PC-9 (cell line): ENCODE measurements at regions of chr11 and their contacts with region 1.

Region 1: GRCh38 chr11:119084663-119085436 is at the start of gene HMBS:
- DNase-seq: peak; percentile 92 to 94
- H3K4me3 ChIP-seq: peak within 1 kb of the TSS; percentile 86
- H3K27ac ChIP-seq: peak within 1 kb of the TSS; percentile 53
- H3K4me1 ChIP-seq: peaks cover 24% of the 10 kb centered on the region
- H3K27me3 ChIP-seq: no peaks in the 10 kb centered on the region
- CTCF ChIP-seq: no peak
- total RNA-seq, gene HMBS: 49.3 and 54.9 TPM in 2 replicates

Region 2: GRCh38 chr11:118051611-118052461 is 1033.0 kb before region 1 on chr11:
- CTCF ChIA-PET with region 1: interaction called, 11 read pairs
- POLR2A ChIA-PET with region 1: no interaction called
- intact Hi-C with region 1: no loop called
- DNase-seq: no peak
- H3K4me3 ChIP-seq: no peak overlapping the region
- H3K27ac ChIP-seq: no peak overlapping the region
- H3K4me1 ChIP-seq: peaks cover 2% of the 10 kb centered on the region; the same call in 1 of the 2 replicates
- H3K27me3 ChIP-seq: peaks cover 16% of the 10 kb centered on the region
- CTCF ChIP-seq: no peak

Region 3: GRCh38 chr11:118988280-118988679 is 96.6 kb before region 1 on chr11:
- CTCF ChIA-PET with region 1: no interaction called
- POLR2A ChIA-PET with region 1: interaction called, 13 read pairs
- intact Hi-C with region 1: no loop called
- DNase-seq: peak; percentile 60 to 73
- H3K4me3 ChIP-seq: peak overlapping the region; percentile 9; the same call in 1 of the 2 replicates
- H3K27ac ChIP-seq: peak overlapping the region; percentile 64
- H3K4me1 ChIP-seq: peaks cover 9% of the 10 kb centered on the region
- H3K27me3 ChIP-seq: no peaks in the 10 kb centered on the region
- CTCF ChIP-seq: no peak

Region 4: DNA sequence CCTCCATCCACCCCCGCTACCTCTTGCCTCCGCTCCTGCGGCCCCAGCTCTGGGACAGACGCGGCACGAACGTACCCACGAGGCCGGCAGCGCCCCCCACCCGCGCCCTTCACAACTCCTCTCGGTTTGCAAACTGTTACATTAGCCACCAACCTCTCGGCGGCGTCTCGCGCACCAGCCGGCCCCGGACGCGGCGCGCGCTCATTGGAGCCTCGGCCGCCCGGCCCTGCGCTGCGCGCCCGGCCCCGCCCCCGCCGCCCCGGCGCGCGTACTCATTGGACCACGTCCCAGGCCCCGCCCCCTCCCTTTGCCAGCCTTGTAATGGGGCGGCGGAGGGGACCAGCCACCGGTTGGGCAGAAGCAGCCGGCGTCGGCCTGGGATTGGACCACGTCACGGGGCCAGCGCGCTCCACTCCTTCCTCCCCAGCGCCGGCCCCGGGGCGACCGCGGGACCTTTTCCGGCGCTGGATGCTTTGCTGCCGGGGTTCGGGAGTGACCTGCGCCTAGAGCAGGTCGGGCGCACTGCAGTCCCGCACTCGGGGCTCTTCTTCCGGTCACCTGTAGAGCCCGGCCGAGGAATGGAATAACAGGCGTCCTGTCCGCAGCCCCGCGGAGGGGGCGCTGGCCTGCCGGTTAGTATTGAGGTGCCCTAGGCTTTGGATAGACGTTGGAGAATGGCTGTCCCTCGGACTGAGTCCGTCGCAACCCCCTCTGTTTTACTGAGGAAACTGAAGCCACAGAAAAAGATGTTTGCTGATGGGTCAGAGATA is 27.7 kb before region 1 on chr11 and contains the start of gene HYOU1:
- CTCF ChIA-PET with region 1: no interaction called
- POLR2A ChIA-PET with region 1: no interaction called
- intact Hi-C with region 1: no loop called
- DNase-seq: peak; percentile 94 to 98
- H3K4me3 ChIP-seq: peak within 1 kb of the TSS; percentile 90
- H3K27ac ChIP-seq: peak within 1 kb of the TSS; percentile 95
- H3K4me1 ChIP-seq: peaks cover 14% of the 10 kb centered on the region
- H3K27me3 ChIP-seq: no peaks in the 10 kb centered on the region
- CTCF ChIP-seq: peak; percentile 41; the same call in 1 of the 2 replicates
- total RNA-seq, gene HYOU1: 92.0 and 117 TPM in 2 replicates

Region 5: GRCh38 chr11:119067371-119068222 is 17.3 kb before region 1 on chr11 and contains the start of gene VPS11:
- CTCF ChIA-PET with region 1: interaction called, 5 read pairs
- POLR2A ChIA-PET with region 1: interaction called, 29 read pairs
- intact Hi-C with region 1: no loop called
- DNase-seq: peak; percentile 95 to 96
- H3K4me3 ChIP-seq: peak within 1 kb of the TSS; percentile 89
- H3K27ac ChIP-seq: peak within 1 kb of the TSS; percentile 55
- H3K4me1 ChIP-seq: peaks cover 8% of the 10 kb centered on the region
- H3K27me3 ChIP-seq: no peaks in the 10 kb centered on the region
- CTCF ChIP-seq: 0 out of 2 replicates have a peak, but pooled peaks have one; percentile 14
- total RNA-seq, gene VPS11: 21.1 and 22.9 TPM in 2 replicates

Region 6: GRCh38 chr11:119262668-119263351 is 178.0 kb after region 1 on chr11:
- CTCF ChIA-PET with region 1: no interaction called
- POLR2A ChIA-PET with region 1: no interaction called
- intact Hi-C with region 1: no loop called
- DNase-seq: no peak
- H3K4me3 ChIP-seq: no peak overlapping the region
- H3K27ac ChIP-seq: no peak overlapping the region
- H3K4me1 ChIP-seq: no peaks in the 10 kb centered on the region
- H3K27me3 ChIP-seq: no peaks in the 10 kb centered on the region
- CTCF ChIP-seq: no peak

Region 7: DNA sequence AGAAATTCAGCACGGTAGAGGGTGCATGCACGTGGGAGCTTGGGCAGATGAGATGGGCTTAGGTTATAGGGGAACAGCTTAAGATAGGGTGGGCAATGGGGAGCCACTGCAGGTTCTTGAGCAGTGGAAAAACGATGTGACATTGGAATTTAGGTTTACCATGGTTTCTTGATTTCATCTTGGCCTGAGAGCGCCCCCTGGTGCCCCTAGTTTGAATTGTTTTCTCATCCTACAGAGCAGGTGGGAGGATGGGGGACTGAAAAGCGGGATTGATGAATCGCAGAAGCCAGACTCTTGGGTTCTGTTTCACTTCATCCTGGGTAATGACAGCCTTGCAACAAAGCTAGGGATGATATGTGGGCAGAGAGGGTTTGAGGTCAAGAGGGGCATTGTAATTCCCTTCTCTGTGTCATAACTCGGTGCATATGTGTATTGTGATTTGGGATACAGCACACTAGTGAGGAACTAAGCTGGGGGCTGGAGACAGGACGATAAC is 238.7 kb after region 1 on chr11:
- CTCF ChIA-PET with region 1: no interaction called
- POLR2A ChIA-PET with region 1: interaction called, 18 read pairs
- intact Hi-C with region 1: no loop called
- DNase-seq: peak; percentile 59 to 71
- H3K4me3 ChIP-seq: no peak overlapping the region
- H3K27ac ChIP-seq: no peak overlapping the region
- H3K4me1 ChIP-seq: peaks cover 22% of the 10 kb centered on the region
- H3K27me3 ChIP-seq: no peaks in the 10 kb centered on the region
- CTCF ChIP-seq: peak; percentile 96

Region 8: DNA sequence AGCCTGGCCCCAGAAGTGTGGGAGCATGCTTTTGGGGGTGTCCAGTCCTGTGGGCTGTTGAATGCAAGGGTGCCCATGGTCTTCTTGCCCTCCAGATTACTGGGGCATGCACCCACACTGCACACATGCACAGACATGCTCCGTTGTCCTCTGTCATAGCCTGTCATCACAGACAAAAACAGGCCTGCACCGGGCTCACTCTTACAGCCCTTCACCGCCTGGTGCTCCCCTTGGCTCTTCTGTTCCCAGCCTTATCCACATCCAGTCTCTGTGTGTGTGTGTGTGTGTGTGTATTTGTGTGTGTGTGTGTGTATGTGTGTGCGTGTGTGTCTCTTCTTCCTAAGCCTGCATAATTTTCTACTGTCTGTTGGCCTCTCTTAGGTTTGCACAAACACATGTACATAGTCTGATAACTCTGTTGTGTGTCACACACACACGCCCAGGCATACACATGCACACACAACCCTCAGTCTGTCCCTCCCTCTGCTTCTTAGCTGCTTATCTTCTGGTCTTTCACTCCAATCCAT is 667.6 kb after region 1 on chr11:
- CTCF ChIA-PET with region 1: no interaction called
- POLR2A ChIA-PET with region 1: no interaction called
- intact Hi-C with region 1: no loop called
- DNase-seq: no peak
- H3K4me3 ChIP-seq: no peak overlapping the region
- H3K27ac ChIP-seq: no peak overlapping the region
- H3K4me1 ChIP-seq: no peaks in the 10 kb centered on the region
- H3K27me3 ChIP-seq: peaks cover 94% of the 10 kb centered on the region
- CTCF ChIP-seq: no peak